ENCODE measurements at regions of chr10 and their contacts with region 1.

Region 1: GRCh38 chr10:71974489-71975021 is 10.4 kb downstream of the CHST3 start:
- DNase-seq: peak; percentile 80
- ATAC-seq: peak; percentile 93
- H3K4me3 Mint-ChIP-seq: no peak overlapping the region
- H3K27ac Mint-ChIP-seq: peak overlapping the region; percentile 3
- H3K4me1 Mint-ChIP-seq: peaks cover 31% of the 10 kb centered on the region
- H3K27me3 Mint-ChIP-seq: no peaks in the 10 kb centered on the region

Region 2: DNA sequence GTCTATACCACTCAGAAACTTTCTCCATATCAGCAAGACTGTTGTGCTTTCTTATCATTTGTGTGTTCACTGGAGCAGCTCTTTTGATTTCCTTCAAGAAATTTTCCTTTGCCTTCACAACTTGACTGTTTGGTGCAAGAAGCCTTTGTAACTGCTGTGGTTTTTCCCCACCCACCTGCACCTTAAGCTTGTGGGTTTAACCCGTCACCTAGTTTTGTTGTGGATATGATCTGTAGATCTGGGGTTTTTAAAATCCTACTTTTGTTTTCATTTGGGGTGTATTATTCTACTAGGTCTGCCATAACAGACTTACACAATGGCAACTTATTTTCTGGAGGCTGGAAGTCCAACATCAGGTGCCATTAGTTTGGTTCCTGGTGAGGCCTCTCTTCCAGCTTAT is 40.9 kb before region 1 on chr10:
- CTCF ChIA-PET with region 1: no interaction called
- POLR2A ChIA-PET with region 1: no interaction called
- intact Hi-C with region 1: loop called in 1 of 2 experiments (anchors 2 kb)
- DNase-seq: peak; percentile 84
- ATAC-seq: peak; percentile 93
- H3K4me3 Mint-ChIP-seq: peak overlapping the region; percentile 0
- H3K27ac Mint-ChIP-seq: peak overlapping the region; percentile 70
- H3K4me1 Mint-ChIP-seq: peaks cover 29% of the 10 kb centered on the region
- H3K27me3 Mint-ChIP-seq: no peaks in the 10 kb centered on the region

Region 3: DNA sequence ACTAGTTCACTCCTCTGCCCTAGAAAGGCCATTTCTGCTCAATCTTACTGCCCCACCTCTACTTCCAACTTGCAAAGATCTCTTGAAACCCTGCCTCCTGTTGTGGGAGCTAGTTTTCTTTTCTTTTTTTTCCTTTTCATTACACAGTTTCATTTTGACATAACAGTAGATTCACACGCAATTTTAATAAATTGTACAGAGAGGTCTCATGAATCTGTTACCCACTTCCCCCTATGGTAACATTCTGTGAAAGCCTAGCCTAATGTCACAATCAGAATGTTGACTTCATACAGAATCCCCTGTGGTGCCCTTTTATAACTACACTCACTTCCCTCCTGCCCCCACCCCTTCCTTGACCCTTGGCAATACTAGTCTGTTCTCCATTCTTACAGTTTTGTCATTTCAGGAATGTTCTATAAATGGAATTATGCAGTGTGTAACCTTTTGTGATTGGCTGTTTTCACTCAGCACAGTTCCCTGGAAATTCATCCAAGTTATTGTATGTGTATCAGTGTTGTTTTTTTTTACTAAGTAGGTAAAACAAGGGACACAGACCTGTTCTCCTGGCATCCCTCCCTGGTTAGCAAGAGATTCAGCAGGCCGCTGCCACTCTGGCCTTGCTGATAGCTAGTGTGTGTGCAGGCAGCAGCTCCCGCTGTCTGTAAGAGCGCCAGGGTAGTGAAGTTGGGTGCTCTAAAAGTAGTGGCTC is 11.1 kb after region 1 on chr10:
- CTCF ChIA-PET with region 1: interaction called, 11 read pairs
- POLR2A ChIA-PET with region 1: interaction called, 3 read pairs
- intact Hi-C with region 1: no loop called
- DNase-seq: no peak
- ATAC-seq: peak; percentile 84
- H3K4me3 Mint-ChIP-seq: no peak overlapping the region
- H3K27ac Mint-ChIP-seq: peak overlapping the region; percentile 68
- H3K4me1 Mint-ChIP-seq: peaks cover 23% of the 10 kb centered on the region
- H3K27me3 Mint-ChIP-seq: peaks cover 3% of the 10 kb centered on the region

Measured in activated CD4-positive, alpha-beta T cell treated with anti-CD3 and anti-CD28 coated beads for 36 hours (primary cell).